Natural killer cell (primary cell): ENCODE measurements at regions of chr5 and their contacts with region 1.

Region 1: GRCh38 chr5:73519531-73520283 is 21.5 kb downstream of the BTF3 start:
- DNase-seq: peak; percentile 41 to 89
- ATAC-seq: peak; percentile 95 to 100 (median 99)
- H3K4me3 ChIP-seq: no peak overlapping the region
- H3K4me3 Mint-ChIP-seq: peak overlapping the region; percentile 35
- H3K27ac ChIP-seq: no peak overlapping the region
- H3K27ac Mint-ChIP-seq: no peak overlapping the region
- H3K4me1 ChIP-seq: peaks cover 5% of the 10 kb centered on the region
- H3K4me1 Mint-ChIP-seq: peaks cover 8 to 9% of the 10 kb centered on the region in 2 donors
- H3K27me3 ChIP-seq: no peaks in the 10 kb centered on the region
- H3K27me3 Mint-ChIP-seq: no peaks in the 10 kb centered on the region
- CTCF ChIP-seq: peak; percentile 72

Region 2: DNA sequence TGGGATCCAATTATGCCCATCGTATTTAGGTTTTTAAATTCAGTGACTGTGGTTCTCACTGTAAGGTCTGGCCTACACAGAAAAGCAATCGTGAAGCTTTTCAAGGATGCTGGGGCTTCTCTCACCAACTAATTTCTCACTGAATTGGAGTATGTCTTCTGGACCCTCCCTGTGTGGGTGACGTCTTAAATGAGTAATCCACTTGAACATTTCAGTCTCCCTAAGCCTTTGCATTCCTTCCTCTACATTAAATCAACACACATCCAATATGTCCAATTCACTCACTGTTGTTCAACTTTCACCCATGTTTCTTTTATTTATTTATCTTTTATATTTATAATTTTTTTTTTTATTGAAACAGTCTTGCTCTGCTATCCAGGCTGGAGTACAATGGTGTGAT is 34.0 kb before region 1 on chr5:
- intact Hi-C with region 1: no loop called
- DNase-seq: no peak
- ATAC-seq: no peak
- H3K4me3 ChIP-seq: no peak overlapping the region
- H3K4me3 Mint-ChIP-seq: no peak overlapping the region
- H3K27ac ChIP-seq: no peak overlapping the region
- H3K27ac Mint-ChIP-seq: no peak overlapping the region
- H3K4me1 ChIP-seq: no peaks in the 10 kb centered on the region
- H3K4me1 Mint-ChIP-seq: no peaks in the 10 kb centered on the region
- H3K27me3 ChIP-seq: no peaks in the 10 kb centered on the region
- H3K27me3 Mint-ChIP-seq: peaks cover 39 to 41% of the 10 kb centered on the region in 2 donors
- CTCF ChIP-seq: no peak

Region 3: DNA sequence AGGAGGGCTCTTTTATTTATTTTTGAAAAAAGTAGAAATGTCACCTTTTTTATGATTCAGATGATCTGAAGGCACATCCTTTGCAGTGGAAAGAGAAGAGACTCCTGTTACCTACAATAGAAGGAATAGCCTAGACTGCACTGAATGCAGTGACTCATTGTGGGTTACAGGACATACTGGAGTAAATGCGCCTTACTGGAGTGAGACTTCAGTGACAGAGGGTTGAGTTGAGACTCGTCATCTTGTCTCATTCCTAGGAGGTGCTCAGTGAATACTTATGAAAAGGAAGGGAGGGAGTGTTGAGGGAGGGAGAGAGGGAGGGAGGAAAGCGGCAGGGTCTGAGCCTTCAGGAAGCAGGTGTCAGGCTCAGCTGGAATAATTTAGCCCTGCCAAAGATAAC is 20.5 kb after region 1 on chr5:
- intact Hi-C with region 1: loop called (anchors 1 kb)
- DNase-seq: no peak
- ATAC-seq: no peak
- H3K4me3 ChIP-seq: no peak overlapping the region
- H3K4me3 Mint-ChIP-seq: no peak overlapping the region
- H3K27ac ChIP-seq: no peak overlapping the region
- H3K27ac Mint-ChIP-seq: no peak overlapping the region
- H3K4me1 ChIP-seq: no peaks in the 10 kb centered on the region
- H3K4me1 Mint-ChIP-seq: no peaks in the 10 kb centered on the region
- H3K27me3 ChIP-seq: no peaks in the 10 kb centered on the region
- H3K27me3 Mint-ChIP-seq: peaks cover 29 to 36% of the 10 kb centered on the region in 2 donors
- CTCF ChIP-seq: no peak

Region 4: GRCh38 chr5:73792687-73793320 is 273.1 kb after region 1 on chr5:
- intact Hi-C with region 1: loop called (anchors 1 kb)
- DNase-seq: peak; percentile 68 to 79
- ATAC-seq: peak; percentile 75 to 88 (median 85)
- H3K4me3 ChIP-seq: no peak overlapping the region
- H3K4me3 Mint-ChIP-seq: no peak overlapping the region
- H3K27ac ChIP-seq: no peak overlapping the region
- H3K27ac Mint-ChIP-seq: no peak overlapping the region
- H3K4me1 ChIP-seq: peaks cover 9% of the 10 kb centered on the region
- H3K4me1 Mint-ChIP-seq: peaks cover 11% of the 10 kb centered on the region in 2 donors
- H3K27me3 ChIP-seq: no peaks in the 10 kb centered on the region
- H3K27me3 Mint-ChIP-seq: no peaks in the 10 kb centered on the region
- CTCF ChIP-seq: peak; percentile 98